Aorta (tissue), 5 donors: ENCODE measurements at regions of chr19 and their contacts with region 1.

Region 1: DNA sequence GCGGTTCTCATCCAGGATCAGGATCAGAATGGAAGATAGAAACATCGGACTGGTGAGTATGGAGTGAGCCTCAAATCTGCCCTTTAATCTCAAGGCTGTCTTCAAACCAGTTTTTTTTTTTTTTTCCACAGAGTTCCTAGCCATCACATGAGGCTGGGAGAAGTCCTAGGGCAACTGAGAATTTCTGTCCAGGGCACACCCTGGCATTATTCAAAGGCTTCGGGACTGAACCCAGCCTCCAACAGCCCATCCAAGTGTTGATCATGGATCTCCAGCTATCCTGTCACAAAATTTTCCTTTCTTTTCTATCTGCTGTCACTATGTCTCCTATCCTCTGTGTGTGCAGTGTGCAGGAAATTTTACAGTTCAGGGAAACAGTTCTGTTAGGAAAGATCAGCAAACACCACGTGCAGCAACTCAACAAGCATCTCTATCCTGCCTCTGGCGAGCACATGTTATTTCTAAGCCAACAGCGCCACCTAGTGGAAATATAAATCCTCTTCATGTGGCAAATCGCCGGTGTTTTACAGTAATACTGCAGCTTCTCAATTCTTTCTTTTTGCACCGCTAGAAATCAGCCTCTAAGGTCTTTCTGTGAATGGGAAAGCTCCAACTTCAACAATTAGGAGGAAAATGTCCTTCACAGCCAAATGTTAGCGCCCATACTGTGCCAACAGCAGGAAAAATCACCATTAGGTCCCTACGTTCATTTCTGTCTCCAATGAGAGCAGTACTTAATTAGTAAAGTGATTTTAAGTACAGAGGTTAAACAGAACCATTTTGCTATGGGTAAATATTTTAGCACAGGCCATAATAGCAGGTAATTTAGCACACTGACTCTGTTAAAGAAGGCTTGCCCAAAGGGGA is 21.4 kb upstream of the ZNF181 start:
- DNase-seq: no peak
- ATAC-seq: peak; percentile 71
- H3K4me3 ChIP-seq: no peak overlapping the region
- H3K27ac ChIP-seq: no peak overlapping the region
- H3K4me1 ChIP-seq: no peaks in the 10 kb centered on the region
- H3K27me3 ChIP-seq: peaks cover 0 to 1% of the 10 kb centered on the region in 2 donors

Region 2: DNA sequence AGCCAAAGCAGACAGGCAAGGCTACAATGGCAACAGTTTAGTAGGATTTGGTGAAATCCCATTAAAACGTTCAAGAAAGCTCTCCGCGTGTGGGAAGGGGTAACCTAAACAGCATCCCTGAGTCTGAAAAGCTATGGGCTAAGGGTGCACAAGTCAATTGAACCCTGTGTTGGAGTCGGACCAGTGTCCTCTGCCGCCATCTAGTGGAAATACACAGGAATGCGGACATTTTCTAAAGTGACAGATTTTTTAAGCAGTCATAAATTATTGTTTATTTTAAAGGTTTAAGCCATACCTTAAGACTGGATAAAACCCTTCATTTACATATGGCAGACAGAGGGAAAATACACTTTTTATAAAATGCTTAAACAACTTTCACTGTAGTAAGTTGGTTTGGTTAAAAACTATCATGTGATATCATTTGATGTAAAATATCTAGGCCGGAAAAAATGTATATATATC is 566.9 kb before region 1 on chr19:
- intact Hi-C with region 1: no loop called
- DNase-seq: no peak
- ATAC-seq: peak; percentile 66
- H3K4me3 ChIP-seq: no peak overlapping the region
- H3K27ac ChIP-seq: no peak overlapping the region
- H3K4me1 ChIP-seq: no peaks in the 10 kb centered on the region
- H3K27me3 ChIP-seq: no peaks in the 10 kb centered on the region

Region 3: GRCh38 chr19:34549833-34550232 is 162.8 kb before region 1 on chr19:
- intact Hi-C with region 1: loop called in 1 of 2 experiments (anchors 5 kb)
- DNase-seq: no peak
- ATAC-seq: no peak
- H3K4me3 ChIP-seq: no peak overlapping the region
- H3K27ac ChIP-seq: no peak overlapping the region
- H3K4me1 ChIP-seq: no peaks in the 10 kb centered on the region
- H3K27me3 ChIP-seq: no peaks in the 10 kb centered on the region

Region 4: DNA sequence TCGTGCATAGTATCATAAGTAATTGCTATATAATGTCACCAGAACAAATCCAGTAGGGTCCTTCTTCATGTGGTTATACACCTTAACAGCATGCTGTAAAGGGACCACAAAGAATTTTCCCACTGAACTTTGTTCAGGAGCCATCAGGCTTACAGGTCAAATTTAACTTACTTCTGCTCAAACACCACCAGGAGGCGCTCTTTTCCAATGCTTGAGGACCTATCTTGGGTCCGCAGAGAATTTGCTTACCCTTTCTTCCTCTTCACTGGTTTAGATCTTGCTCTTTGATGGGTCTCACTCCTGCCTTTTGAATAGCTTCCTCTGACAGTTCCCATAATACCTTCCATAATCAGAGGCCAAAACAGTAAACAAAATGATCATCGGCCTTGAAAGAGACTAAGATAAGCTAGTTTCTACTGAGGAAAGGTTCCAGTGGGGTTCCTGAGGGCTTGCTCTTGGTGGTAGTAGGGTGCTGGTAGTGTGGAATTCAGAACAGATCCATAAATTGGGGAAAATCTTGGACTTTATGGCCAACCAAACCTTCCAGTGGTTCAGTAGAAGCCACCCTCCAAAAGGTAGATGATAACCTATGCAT is 73.0 kb before region 1 on chr19:
- intact Hi-C with region 1: loop called (anchors 1 to 2 kb)
- DNase-seq: peak; percentile 51 to 52
- ATAC-seq: no peak
- H3K4me3 ChIP-seq: no peak overlapping the region
- H3K27ac ChIP-seq: no peak overlapping the region
- H3K4me1 ChIP-seq: no peaks in the 10 kb centered on the region
- H3K27me3 ChIP-seq: peaks cover 0 to 2% of the 10 kb centered on the region in 2 donors